Colonic mucosa (tissue), 4 donors: ENCODE measurements at regions of chr11 and their contacts with region 1.

Region 1: GRCh38 chr11:15835788-15836411 is 520.4 kb downstream of the SOX6 start:
- DNase-seq: no peak
- H3K4me3 ChIP-seq: no peak overlapping the region
- H3K27ac ChIP-seq: no peak overlapping the region
- H3K4me1 ChIP-seq: peaks cover 6% of the 10 kb centered on the region
- H3K27me3 ChIP-seq: no peaks in the 10 kb centered on the region
- CTCF ChIP-seq: no peak

Region 2: DNA sequence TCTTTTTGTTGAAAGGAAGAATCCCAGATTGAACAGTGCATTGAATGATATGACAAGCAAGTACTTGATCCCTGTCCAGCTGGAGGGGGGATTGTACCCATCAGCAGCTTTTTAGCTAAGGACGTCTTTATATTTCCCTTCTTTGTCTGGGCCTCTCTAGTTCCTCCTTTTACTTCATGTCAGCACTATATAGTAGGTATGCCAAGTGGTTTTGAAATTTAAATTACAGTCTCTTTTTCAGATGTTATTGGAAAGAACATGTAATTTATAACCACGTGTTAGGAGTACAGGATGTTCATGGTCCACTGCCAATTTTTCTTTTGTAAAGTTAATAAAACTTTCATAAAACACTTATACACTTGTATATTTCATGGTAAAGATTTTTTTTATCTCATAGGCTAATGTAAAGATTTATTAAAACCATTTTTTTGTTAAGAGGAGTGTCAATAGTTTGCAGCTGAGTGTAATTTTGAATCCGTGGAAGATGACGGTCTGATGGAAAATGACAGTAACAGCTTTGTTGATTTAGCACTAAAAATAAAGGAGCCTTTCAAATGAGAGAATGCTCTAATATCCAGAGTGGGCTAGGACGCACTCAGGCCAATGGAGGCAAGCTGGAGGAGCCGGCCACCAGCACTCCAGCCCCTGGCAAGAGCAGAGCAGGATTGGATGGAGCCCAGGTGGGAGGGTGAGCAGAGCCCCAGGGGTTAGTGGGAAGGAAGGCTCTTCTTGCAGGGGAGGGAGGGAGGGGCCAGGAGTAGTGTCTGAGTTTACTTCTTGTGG is 232.9 kb before region 1 on chr11:
- intact Hi-C with region 1: no loop called
- DNase-seq: no peak
- H3K4me3 ChIP-seq: no peak overlapping the region
- H3K27ac ChIP-seq: no peak overlapping the region
- H3K4me1 ChIP-seq: no peaks in the 10 kb centered on the region
- H3K27me3 ChIP-seq: no peaks in the 10 kb centered on the region
- CTCF ChIP-seq: no peak

Region 3: DNA sequence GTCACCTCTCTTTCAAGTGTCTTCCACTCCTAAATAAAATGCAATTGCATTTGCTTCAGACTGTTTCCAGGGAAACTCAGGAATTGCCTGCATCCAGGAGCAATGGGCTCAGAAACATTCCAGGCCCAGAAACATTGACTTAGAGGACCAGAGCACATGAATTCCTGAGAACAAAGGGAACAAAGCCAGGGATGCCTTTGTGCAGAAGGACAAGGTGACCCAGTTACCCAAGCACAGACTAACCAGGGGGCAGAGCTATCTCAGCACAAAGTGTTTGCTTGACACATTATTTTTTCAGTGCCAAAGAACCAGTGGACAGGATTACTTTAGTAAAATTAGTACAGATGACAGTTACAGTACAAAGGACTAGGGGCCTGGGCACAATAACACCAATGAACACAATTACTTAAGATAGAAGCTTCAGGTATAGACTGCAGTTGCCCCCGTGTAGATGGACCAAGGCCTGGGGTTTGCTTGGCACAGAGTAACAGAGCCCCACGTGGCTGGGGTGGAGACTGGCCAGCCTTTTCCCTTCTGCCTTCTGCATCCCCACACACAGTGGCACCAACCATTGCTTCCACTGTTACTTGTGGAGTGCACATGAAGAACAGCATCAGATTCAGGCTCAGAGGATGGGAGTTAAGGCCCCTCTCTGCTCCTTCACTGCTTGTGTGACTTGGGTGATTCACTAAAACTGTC is 220.4 kb before region 1 on chr11:
- intact Hi-C with region 1: no loop called
- DNase-seq: no peak
- H3K4me3 ChIP-seq: no peak overlapping the region
- H3K27ac ChIP-seq: no peak overlapping the region
- H3K4me1 ChIP-seq: no peaks in the 10 kb centered on the region
- H3K27me3 ChIP-seq: no peaks in the 10 kb centered on the region
- CTCF ChIP-seq: no peak

Region 4: GRCh38 chr11:16605894-16606783 is 770.2 kb after region 1 on chr11:
- intact Hi-C with region 1: loop called (anchors 10 kb)
- DNase-seq: peak; percentile 92
- H3K4me3 ChIP-seq: peak overlapping the region; percentile 45
- H3K27ac ChIP-seq: peak overlapping the region; percentile 14
- H3K4me1 ChIP-seq: peaks cover 6% of the 10 kb centered on the region
- H3K27me3 ChIP-seq: peaks cover 34% of the 10 kb centered on the region
- CTCF ChIP-seq: peak; percentile 93